Aorta (tissue), 5 donors: ENCODE measurements at regions of chr12 and their contacts with region 1.

Region 1: DNA sequence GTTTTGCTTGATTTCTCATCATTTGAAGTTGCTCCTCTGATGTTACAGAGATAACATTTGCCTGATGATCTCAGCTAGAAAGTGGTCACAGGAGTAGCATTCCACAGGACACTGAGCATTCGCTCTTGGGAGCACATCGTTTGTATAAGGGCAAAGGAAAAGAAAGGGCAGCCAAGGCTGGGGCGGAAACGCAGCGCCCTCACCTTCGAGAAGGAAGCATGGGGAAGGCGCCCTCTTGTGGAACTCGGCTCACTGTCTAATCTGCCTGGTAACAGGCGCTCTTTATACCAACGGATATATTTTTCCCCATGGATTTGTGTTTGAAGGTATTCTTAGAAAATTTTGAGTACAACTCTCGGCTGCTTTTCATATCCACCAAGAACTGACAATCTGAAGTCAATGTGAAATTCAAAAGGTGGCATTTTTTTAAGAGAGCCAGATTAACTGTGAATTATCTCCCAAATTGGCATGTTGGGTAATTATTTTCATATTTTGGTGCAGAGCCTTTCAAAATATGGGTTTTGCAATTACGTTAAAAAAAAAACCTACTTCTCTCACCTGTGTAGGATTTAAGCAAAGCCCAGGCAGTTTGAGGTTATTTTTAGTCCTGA is 172.7 kb downstream of the CAND1 start:
- DNase-seq: peak; percentile 89 to 95
- ATAC-seq: peak; percentile 90
- H3K4me3 ChIP-seq: no peak overlapping the region
- H3K27ac ChIP-seq: no peak overlapping the region
- H3K4me1 ChIP-seq: no peaks in the 10 kb centered on the region
- H3K27me3 ChIP-seq: no peaks in the 10 kb centered on the region

Region 2: GRCh38 chr12:67355578-67356379 is 86.1 kb before region 1 on chr12:
- intact Hi-C with region 1: loop called (anchors 2 to 5 kb)
- DNase-seq: no peak
- ATAC-seq: peak; percentile 80
- H3K4me3 ChIP-seq: no peak overlapping the region
- H3K27ac ChIP-seq: no peak overlapping the region
- H3K4me1 ChIP-seq: peaks cover 0 to 3% of the 10 kb centered on the region in 2 donors
- H3K27me3 ChIP-seq: no peaks in the 10 kb centered on the region

Region 3: GRCh38 chr12:67382241-67382871 is 59.5 kb before region 1 on chr12:
- intact Hi-C with region 1: no loop called
- DNase-seq: no peak
- ATAC-seq: no peak
- H3K4me3 ChIP-seq: no peak overlapping the region
- H3K27ac ChIP-seq: no peak overlapping the region
- H3K4me1 ChIP-seq: no peaks in the 10 kb centered on the region
- H3K27me3 ChIP-seq: no peaks in the 10 kb centered on the region

Region 4: DNA sequence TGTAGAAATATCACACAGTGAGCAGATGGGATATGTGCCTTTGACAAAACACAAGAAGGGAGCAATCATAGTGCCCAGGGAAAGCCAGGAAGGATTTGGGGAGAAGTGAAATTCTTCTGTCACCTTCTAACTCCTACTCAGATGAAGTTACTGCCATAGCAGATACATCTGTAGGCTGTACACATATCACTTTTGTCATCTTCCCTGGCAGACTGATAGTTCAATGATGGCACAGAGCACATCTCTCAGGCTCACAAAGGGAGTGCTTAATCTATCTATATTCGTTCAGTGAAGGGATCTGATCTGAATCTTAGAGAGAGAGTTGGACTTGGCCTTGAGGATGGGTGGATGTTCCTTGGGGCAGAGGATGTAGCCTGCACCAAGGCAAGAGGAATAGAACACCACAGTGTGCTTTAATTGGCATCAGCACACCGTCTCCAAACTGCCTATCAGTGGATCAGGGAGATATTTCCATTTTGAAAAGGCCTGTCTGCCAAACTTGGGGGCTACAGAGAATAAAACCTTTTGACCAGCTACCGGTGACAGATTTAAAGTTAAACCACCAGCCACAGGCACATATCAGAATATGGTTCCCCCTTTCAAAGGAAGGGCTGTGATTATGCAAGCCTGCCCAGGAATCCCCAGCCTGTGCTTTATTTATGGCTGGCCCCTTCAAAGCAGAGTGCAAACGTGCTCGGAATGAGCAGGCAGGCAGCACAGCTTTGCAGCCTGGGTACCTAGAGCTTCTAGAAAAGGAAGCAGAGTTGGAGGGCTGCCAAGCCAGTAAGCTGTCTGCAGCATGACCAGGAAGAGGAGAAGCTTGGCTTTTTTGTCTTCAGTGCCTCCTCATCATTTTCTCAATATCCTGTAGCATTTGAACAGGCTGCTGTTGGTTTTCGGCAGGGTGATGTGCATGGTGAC is 41.2 kb after region 1 on chr12:
- intact Hi-C with region 1: no loop called
- DNase-seq: peak; percentile 79 to 86
- ATAC-seq: peak; percentile 33
- H3K4me3 ChIP-seq: no peak overlapping the region
- H3K27ac ChIP-seq: no peak overlapping the region
- H3K4me1 ChIP-seq: peaks cover 0 to under 1% of the 10 kb centered on the region in 2 donors
- H3K27me3 ChIP-seq: no peaks in the 10 kb centered on the region

Region 5: GRCh38 chr12:67515679-67516340 is 74.0 kb after region 1 on chr12:
- intact Hi-C with region 1: no loop called
- DNase-seq: no peak
- ATAC-seq: no peak
- H3K4me3 ChIP-seq: no peak overlapping the region
- H3K27ac ChIP-seq: no peak overlapping the region
- H3K4me1 ChIP-seq: peaks cover 0 to 7% of the 10 kb centered on the region in 2 donors
- H3K27me3 ChIP-seq: no peaks in the 10 kb centered on the region

Region 6: DNA sequence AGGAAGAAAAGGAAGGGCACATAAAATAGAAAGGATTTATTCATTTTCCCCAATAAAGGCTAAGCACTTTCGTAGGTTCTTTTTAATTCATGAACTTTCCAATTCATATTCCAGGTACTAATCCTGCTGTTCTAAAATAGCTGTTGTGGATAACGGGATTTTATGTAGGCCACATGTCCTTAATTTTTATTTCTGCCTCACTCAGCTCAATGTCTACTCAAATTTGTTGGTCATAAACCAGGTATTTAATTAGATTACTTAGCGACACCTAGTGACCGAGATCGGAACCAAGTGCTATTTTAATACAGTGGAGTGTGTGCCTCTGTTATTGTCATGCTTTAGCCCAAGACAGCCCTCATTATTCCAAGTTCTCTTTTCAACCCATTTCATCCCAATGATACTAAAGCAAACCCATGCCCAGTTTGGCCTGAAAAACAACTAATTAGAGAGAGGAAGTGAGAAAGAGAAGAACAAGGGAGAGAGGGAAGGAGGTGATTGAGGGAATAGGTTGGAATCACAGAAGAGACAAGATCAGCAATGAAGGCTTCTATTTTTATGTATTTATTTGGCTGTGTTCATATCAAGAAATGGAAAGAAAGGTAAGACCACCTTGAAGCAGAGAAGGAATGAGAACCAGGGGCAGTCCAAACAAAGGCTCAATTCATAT is 501.5 kb after region 1 on chr12:
- intact Hi-C with region 1: loop called (anchors 5 kb)
- DNase-seq: peak in 1 of 2 donors; percentile 54
- ATAC-seq: peak; percentile 90
- H3K4me3 ChIP-seq: no peak overlapping the region
- H3K27ac ChIP-seq: no peak overlapping the region
- H3K4me1 ChIP-seq: no peaks in the 10 kb centered on the region
- H3K27me3 ChIP-seq: no peaks in the 10 kb centered on the region